ENCODE measurements at regions of chr2 and their contacts with region 1.

Region 1: DNA sequence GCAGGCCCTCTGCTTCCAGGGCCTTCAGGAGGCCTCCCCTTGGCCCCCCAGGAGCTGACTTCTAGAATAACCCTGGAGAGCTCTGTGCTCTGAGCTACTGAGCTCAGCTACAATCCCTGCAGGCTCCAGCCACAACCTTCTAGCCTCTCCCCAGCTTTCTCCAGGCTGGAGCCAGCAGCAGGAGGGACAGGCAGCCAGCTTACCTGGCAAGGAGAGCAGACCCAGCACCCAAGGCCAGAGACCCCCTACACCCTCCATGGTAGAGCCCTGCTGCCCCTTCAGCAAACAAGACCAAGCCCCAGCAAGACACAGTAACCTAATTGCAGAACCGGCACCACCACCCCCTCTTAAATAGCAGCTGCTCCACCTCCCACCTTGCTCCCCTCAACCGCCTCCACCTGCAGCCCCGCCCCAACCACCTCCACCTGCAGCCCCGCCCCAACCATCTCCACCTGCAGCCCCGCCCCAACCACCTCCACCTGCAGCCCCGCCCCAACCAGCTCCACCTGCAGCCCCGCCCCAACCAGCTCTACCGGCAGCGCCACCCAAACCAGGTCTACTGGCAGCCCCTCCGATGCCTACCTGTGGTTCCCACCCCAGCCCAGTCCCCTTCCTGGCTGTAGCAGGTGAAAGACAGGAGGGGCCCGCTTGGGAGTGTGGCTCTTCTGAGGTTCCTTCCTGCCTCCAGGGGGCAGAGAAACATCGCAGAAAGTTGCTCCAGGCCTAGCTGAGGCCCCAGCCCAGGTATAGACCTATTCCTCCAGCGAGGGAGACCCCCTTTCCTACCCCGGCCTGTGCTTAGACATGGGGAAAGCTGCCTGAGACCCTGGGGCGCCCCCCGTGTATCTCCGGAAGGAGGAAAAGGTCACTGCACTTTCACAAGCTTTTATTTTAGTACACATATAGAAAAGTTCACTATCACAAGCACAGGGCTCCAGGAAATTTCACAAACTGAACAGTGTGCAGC is at the start of gene ASTL:
- DNase-seq: no peak
- H3K4me3 ChIP-seq: no peak within 1 kb of the TSS
- H3K27me3 ChIP-seq: peaks cover 2% of the 10 kb centered on the region; the same call in 1 of the 2 replicates
- CTCF ChIP-seq: peak; percentile 74
- polyA plus RNA-seq, gene ASTL: not detected in 2 replicates

Region 2: DNA sequence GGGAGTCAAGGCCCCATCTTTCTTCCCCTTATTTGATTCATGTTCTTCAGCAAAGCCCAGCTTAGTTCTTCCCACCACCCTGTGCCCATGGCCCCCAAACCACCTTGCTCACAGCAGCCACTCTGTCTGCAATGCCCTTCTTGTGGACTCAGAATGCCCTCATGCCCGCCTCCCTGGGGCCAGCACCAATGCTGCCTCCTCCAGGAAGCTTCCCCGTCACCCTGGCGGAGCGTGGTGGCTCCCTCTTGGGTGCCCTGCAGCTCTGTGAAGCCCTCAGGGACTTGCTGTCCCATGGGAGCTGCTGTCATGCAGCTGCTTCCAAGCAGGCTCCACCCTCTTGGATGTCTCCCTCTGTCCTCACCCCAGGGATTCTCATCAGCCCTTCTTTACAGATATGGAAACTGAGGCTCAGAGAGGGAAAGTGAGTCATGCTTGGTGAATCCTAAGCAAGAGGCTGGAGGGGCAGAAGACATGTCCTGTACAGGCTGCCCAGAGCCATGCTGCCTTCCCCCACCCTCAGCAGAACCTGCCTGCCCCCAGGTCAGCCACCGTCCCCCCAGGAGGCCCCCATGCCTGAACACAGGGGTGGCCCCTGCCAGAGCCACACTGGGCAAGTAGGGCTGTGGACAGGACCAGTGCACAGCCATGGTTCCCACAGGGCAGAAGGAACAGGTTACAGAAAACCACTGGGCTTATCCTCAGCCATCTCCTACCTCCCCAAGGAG is 18.6 kb after region 1 on chr2:
- CTCF ChIA-PET with region 1: interaction called, 24 read pairs
- POLR2A ChIA-PET with region 1: no interaction called
- DNase-seq: no peak
- H3K4me3 ChIP-seq: no peak overlapping the region
- H3K27me3 ChIP-seq: 0 out of 2 replicates have a peak, but pooled peaks cover 2% of the 10 kb centered on the region
- CTCF ChIP-seq: no peak

Region 3: GRCh38 chr2:96174251-96175144 is 36.0 kb after region 1 on chr2:
- CTCF ChIA-PET with region 1: interaction called, 121 read pairs
- POLR2A ChIA-PET with region 1: no interaction called
- DNase-seq: no peak
- H3K4me3 ChIP-seq: no peak overlapping the region
- H3K27me3 ChIP-seq: no peaks in the 10 kb centered on the region
- CTCF ChIP-seq: peak; percentile 90

Region 4: GRCh38 chr2:96188821-96189526 is 50.5 kb after region 1 on chr2:
- CTCF ChIA-PET with region 1: no interaction called
- POLR2A ChIA-PET with region 1: no interaction called
- DNase-seq: no peak
- H3K4me3 ChIP-seq: no peak overlapping the region
- H3K27me3 ChIP-seq: no peaks in the 10 kb centered on the region
- CTCF ChIP-seq: no peak

Region 5: DNA sequence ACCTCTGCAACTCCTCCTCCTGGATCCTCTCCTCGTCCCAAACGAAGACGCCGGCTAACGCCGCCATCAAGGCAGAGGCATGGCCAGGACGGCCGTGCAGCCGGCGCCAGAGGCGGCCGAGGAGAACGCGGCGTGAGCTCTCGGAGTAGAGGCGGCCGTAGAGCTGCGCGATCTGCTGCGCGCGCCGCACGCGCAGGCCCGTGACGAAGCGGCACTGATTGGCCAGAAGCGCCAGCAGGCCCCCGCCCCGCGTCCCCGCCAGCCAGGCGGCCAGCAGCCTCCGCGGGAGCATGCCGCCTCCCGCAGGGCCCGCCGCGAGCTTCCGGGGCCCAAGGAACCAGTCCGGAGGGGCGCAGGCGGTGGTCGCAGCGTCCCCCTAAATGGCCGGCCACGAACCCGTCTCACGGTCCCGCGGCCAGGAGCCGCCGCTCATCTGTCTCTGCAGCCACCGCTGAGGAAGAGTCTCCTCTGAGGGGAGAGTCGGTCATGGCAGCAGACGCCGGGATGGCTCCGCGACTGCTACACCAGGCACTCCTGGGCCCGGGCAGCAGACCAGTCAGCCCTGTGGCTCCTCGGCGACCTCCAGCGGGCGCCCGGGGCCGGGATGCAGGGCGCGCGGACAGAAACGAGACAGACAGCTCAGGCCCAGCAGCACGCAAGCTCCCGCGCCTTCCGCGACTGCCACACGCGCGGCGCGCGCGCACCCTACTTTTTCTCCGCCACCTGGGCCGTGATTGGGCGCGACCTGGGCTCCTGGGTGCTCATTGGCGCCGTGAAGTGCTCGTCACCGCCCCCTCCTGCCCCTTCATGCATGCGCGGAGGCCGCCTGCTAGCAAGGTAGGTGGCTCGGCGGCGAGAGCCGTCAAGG is 69.9 kb after region 1 on chr2 and contains the start of gene STARD7:
- CTCF ChIA-PET with region 1: interaction called, 10 read pairs
- POLR2A ChIA-PET with region 1: no interaction called
- DNase-seq: peak; percentile 76
- H3K4me3 ChIP-seq: peak within 1 kb of the TSS; percentile 96
- H3K27me3 ChIP-seq: no peaks in the 10 kb centered on the region
- CTCF ChIP-seq: 0 out of 2 replicates have a peak, but pooled peaks have one; percentile 14
- polyA plus RNA-seq, gene STARD7: 56.1 and 101 TPM in 2 replicates

Region 6: DNA sequence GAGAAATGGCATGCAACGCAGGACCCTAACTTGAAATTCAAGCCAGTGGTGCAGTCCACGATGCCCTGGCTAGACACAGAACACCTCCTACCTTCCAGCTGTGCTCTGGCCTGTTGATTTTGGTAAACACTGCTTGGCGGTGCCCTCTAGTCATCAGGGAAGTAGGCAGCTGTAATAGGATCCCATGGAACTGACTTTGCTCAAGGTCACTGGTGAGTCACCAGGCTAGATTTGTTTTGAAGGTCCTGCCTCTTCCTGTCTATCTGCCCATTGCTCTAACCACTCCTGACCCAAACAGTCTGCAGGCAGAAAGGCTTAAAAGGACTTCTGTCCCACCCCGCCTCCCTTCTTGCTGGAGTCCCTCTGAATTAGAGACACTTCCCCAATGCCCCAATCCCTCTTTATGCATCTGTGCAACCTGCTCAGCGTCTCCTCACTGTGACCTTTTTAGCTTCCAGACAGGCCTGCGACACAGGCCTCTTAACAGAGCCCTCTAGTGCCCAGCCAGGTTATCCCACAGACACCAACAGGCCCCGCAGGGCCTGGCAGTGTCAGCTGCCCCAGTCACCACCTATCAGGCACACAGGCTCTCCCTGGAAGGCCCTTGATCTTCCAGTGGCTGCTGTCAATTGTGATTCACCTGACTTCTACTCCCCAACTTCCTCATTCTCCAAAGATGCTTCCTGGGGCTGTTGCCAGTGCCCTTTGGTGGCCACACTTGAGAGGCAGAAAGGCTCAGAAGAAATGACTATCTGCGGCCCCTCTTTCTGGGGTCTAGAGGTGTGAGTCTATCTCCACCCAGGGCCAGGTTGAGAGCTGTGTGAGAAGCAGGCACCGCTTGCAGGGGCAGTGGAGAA is 122.2 kb after region 1 on chr2:
- CTCF ChIA-PET with region 1: interaction called, 62 read pairs
- POLR2A ChIA-PET with region 1: no interaction called
- DNase-seq: peak; percentile 50
- H3K4me3 ChIP-seq: no peak overlapping the region
- H3K27me3 ChIP-seq: no peaks in the 10 kb centered on the region
- CTCF ChIP-seq: peak; percentile 52

Region 7: GRCh38 chr2:96265840-96266679 is 127.6 kb after region 1 on chr2 and contains the starts of genes CIAO1 and TMEM127:
- CTCF ChIA-PET with region 1: interaction called, 62 read pairs
- POLR2A ChIA-PET with region 1: no interaction called
- DNase-seq: peak; percentile 84
- H3K4me3 ChIP-seq: peak within 1 kb of the TSS; percentile 92
- H3K27me3 ChIP-seq: no peaks in the 10 kb centered on the region
- CTCF ChIP-seq: peak; percentile 41
- polyA plus RNA-seq, gene CIAO1: 76.5 and 90.0 TPM in 2 replicates
- polyA plus RNA-seq, gene TMEM127: 56.2 and 115 TPM in 2 replicates

Region 8: GRCh38 chr2:96396095-96396494 is 257.6 kb after region 1 on chr2:
- CTCF ChIA-PET with region 1: no interaction called
- POLR2A ChIA-PET with region 1: no interaction called
- DNase-seq: no peak
- H3K4me3 ChIP-seq: no peak overlapping the region
- H3K27me3 ChIP-seq: peaks cover 13% of the 10 kb centered on the region
- CTCF ChIP-seq: no peak

Region 9: DNA sequence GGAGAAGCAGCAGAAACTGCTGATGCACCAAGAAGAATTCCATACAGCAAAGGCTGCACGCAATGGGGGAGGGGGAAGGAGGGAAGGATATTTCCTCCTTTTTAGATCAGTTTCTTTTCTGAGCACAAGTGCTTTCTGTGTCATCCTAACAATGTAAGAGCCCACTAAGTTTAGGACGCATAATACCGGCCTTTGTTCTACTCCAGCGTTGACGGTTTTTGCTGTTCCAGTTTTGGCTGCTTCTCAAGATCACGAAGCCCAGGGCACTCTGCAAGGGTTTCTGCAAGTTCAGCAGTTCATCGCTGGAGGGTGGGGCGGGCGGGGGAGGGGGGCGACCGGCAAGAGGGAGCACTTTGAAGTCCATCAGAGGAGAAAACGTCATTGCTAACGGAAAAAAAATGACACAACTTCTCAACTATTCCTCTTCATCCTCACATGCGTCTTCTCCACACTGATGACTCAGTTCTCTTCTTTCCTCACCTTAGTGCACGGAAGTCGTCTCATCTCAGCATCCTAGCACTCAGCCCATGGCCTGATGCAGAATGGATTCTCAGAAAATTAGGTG is 839.3 kb after region 1 on chr2:
- CTCF ChIA-PET with region 1: no interaction called
- POLR2A ChIA-PET with region 1: no interaction called
- DNase-seq: peak; percentile 19
- H3K4me3 ChIP-seq: no peak overlapping the region
- H3K27me3 ChIP-seq: no peaks in the 10 kb centered on the region
- CTCF ChIP-seq: no peak